PC-9 (cell line): ENCODE measurements at regions of chr9 and their contacts with region 1.

Region 1: DNA sequence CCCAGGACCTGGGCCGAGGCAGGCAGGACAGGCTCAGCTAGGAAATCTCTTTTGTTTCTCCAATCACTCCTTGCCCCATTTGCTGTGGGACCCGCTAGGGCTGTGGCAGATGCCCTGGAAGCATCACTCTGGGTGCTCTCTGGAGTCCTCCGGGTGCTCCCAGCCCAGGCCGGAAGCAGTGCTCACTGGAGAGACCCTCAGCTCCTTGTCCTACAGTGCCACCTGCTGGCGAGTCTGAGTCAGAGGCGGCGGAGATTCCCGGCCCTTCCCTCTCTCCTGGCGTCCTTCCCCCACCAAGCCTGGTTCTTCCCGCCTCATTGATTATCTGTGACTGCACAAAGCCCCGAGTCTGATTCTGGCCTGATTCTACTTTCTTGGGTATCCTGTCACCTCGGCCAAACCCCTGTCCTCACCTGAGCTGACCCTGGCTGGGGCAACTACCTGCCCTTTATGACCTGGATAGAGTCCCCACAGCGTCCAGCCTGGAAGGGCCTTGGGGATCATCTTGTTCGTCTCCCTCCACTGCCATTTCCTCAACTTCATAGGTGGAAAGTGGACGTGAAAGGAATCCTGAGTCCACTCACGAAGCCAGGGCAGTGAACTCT is 7.3 kb upstream of the BARHL1 start:
- DNase-seq: peak; percentile 53 to 75
- H3K4me3 ChIP-seq: no peak overlapping the region
- H3K27ac ChIP-seq: no peak overlapping the region
- H3K4me1 ChIP-seq: no peaks in the 10 kb centered on the region
- H3K27me3 ChIP-seq: peaks cover 78% of the 10 kb centered on the region
- CTCF ChIP-seq: peak; percentile 82

Region 2: DNA sequence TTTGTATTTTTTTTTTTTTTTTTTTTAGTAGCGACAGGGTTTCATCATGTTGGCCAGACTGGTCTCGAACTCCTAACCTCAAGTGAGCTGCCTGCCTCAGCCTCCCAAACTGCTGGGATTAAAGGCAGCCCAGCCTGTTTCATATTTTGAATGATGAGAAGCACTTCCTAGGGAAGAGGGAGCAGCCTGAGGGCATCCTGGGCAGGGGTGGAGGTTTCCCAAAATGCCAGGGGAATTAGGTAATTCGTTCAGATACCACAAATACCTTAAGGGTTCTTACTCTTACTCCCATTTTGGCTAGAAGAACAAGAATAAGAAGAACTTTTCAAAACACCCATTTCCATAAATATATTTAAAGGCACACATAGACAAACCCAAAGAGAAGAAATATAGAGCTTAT is 805.8 kb before region 1 on chr9:
- CTCF ChIA-PET with region 1: no interaction called
- POLR2A ChIA-PET with region 1: no interaction called
- intact Hi-C with region 1: loop called (anchors 5 kb)
- DNase-seq: peak in 1 of 2 experiments; percentile 57
- H3K4me3 ChIP-seq: no peak overlapping the region
- H3K27ac ChIP-seq: no peak overlapping the region
- H3K4me1 ChIP-seq: no peaks in the 10 kb centered on the region
- H3K27me3 ChIP-seq: peaks cover 73% of the 10 kb centered on the region
- CTCF ChIP-seq: no peak

Region 3: DNA sequence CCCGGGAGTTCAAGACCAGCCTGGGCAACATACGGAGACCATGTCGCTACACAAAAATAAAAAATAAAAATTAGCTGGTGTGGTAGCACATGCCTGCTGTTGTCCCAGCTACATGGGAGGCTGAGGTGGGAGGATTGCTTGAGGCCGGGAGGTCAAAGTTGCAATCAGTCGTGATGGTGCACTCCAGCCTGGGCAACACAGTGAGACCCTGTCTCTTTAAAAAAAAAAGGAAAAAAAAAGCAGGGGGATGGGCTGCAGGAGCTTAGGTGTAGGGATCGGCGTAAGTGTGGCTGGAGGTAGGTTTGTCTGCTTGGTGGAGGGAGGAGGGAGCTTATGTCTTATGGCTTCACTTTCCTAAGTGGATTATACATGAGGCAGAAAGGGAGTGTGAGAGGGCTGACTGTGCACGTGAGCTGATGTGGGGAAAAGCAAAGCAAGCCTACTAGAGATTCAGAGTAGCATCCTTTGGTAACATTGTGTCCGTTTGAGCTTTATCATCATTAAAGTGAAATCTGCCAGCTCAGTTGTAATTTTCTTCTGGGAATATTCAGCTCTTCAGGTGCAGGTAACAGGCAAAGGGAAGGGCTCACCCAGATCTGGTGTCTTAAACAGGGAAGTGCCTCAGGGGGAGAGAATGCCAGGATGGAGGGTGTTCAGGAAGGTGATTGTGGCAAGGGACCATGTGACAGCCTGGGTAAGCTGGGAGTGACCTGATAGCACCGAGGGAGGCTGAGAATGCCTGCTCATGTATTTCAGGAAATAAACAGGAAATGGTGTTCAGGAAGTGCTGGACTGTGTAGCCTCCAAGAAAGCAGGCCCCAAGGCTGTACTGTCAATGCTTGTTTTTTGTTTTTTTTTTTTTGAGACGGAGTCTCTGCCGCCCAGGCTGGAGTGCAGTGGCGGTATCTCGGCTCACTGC is 202.7 kb before region 1 on chr9:
- CTCF ChIA-PET with region 1: no interaction called
- POLR2A ChIA-PET with region 1: interaction called, 12 read pairs
- intact Hi-C with region 1: no loop called
- DNase-seq: peak; percentile 40 to 73
- H3K4me3 ChIP-seq: no peak overlapping the region
- H3K27ac ChIP-seq: no peak overlapping the region
- H3K4me1 ChIP-seq: no peaks in the 10 kb centered on the region
- H3K27me3 ChIP-seq: no peaks in the 10 kb centered on the region
- CTCF ChIP-seq: no peak

Region 4: DNA sequence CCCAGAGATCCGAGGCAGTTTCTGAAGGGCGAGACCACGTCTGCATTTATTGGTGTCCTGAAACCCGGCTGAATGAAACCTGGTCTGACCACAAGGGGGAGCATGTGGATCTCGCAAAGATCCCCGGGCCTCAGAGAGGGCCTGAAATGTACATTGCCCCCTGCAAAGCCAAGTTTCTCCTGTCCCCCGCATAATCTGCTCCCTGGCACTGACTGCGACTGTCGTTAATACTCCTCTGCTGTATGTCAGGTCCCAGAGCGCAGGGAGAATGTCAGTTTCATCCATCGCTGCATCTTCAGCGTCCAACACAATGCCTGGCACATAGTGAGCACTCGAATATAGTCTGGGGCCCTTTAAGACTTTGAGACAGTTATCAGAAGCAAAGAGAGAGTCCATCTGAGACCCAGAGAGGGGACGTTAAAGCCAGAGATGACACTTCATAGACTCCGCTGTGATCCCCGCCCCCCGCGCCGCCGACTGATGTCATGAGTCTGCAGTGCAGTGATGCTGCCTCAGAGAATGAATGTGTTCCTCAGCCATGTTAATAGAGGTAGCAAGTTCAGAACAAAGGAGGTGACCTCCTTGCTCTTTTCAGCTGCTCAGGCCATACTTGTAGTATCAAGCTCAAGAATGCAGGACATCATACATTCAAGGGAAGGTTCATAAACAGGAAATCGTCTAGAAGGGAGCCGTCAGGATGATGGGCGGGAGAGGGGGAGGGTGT is 67.2 kb before region 1 on chr9:
- CTCF ChIA-PET with region 1: no interaction called
- POLR2A ChIA-PET with region 1: no interaction called
- intact Hi-C with region 1: loop called (anchors 1 kb)
- DNase-seq: peak in 1 of 2 experiments; percentile 67
- H3K4me3 ChIP-seq: no peak overlapping the region
- H3K27ac ChIP-seq: no peak overlapping the region
- H3K4me1 ChIP-seq: no peaks in the 10 kb centered on the region
- H3K27me3 ChIP-seq: peaks cover 85% of the 10 kb centered on the region
- CTCF ChIP-seq: peak; percentile 87

Region 5: DNA sequence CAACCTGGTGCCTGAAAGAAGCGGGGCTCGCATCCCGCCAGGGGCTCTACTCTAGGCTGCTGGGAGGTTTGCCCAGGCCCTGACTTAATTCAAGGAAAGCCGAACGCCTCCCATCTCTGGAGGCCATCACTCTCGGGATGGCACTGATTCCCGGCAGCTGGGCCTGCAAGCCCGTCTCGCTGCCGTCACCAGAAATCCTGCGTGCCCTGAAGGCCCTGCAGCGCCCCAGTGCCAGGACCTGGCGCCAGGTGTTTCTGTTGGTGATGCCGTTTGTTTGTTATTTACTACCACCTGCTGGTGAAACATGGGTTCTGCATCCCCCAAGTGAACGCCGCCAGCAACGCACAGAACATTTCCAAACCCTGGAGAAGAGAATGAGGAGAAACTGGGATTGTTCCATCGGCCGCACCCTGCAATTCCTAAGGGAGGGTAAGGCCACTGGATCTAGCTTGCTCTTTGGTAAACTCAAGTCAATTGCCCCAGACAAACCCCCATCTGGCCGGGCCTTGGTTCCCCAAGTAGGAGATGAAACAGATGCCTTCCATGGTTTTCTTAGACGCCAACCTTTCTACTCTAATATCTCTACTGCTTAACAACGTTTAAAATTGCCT is 225.0 kb after region 1 on chr9:
- CTCF ChIA-PET with region 1: no interaction called
- POLR2A ChIA-PET with region 1: no interaction called
- intact Hi-C with region 1: no loop called
- DNase-seq: peak; percentile 58 to 68
- H3K4me3 ChIP-seq: no peak overlapping the region
- H3K27ac ChIP-seq: no peak overlapping the region
- H3K4me1 ChIP-seq: no peaks in the 10 kb centered on the region
- H3K27me3 ChIP-seq: peaks cover 13% of the 10 kb centered on the region
- CTCF ChIP-seq: peak; percentile 92